WTC11 (cell line): ENCODE measurements at regions of chr22 and their contacts with region 1.

Region 1: DNA sequence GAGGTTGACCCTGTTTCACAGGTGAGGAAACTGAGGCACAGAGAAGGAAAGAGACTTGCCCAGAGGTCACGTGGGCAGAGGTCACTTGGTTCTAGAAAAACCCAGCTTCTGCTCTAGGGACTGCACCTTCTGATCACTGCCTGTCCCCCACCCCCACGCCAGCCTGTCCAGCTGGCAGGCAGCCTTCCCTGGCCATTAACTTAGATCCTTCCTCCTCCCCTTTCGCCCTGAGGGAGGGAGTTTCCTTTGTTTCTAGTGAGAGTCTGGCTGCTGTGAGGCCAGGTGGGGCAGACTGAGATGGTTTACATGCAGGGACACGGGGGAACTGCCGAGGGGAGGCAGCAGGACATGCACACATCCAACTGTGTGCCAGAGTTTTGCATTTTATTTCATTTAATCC is 3.2 kb downstream of the FAM83F start:
- DNase-seq: peak; percentile 62
- ATAC-seq: peak; percentile 31
- H3K4me3 Mint-ChIP-seq: peak overlapping the region; percentile 64
- H3K27ac Mint-ChIP-seq: peak overlapping the region; percentile 100
- H3K4me1 Mint-ChIP-seq: peaks cover 79% of the 10 kb centered on the region
- H3K27me3 Mint-ChIP-seq: peaks cover 8% of the 10 kb centered on the region
- CTCF ChIP-seq: no peak

Region 2: DNA sequence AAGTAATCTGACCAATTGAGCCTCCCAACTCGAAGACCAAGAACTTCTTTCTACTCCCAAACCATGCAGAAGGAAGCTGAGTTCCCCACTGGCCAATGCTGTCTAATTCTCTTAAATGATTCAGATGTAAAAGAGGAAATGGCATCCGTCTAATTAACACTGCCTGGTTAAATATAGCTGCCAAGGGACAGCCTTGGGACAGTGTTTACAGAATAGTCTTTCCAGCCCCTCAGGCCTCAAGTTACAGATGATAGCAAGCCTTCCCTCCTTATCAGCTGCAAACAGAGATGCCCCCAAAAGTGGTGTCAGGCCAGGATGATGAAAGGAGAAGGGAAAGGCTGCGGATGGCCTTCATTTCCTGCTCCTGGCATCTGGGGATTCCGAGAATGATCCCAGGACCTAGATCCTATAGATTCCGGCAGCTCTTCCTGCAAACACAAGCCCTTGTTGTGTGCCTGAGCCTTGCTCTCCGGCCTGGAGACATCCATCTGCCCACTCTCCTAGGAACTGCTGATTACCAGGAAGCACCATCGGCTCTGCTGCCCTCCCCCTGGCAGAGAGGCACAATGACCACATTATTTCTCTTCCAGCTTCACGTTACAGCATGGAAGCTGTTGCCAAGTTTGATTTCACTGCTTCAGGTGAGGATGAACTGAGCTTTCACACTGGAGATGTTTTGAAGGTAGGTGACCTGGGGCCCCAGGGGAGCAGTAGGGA is 51.3 kb before region 1 on chr22:
- CTCF ChIA-PET with region 1: interaction called, 10 read pairs
- POLR2A ChIA-PET with region 1: no interaction called
- DNase-seq: no peak
- ATAC-seq: no peak
- H3K4me3 Mint-ChIP-seq: no peak overlapping the region
- H3K27ac Mint-ChIP-seq: no peak overlapping the region
- H3K4me1 Mint-ChIP-seq: peaks cover 54% of the 10 kb centered on the region
- H3K27me3 Mint-ChIP-seq: peaks cover 6% of the 10 kb centered on the region; the same call in 1 of the 2 replicates
- CTCF ChIP-seq: no peak

Region 3: DNA sequence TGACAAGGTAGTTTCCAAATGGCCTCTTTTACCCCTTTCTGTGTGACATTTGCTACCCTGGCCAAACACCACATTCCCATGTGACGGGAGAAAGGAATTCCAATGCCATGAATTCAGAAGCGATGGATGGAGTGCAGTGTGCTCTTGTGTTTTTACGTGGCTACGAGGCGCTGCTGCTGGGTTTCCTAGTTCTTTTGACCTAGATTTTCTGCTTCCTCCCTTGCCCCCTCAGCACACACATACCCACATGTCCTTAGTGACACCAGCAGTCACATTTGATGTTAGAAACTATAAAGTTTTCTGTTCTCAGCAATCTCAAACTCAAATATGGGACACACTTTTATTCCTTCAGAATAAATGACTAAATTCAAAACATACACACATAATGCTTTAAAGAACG is 45.6 kb before region 1 on chr22:
- CTCF ChIA-PET with region 1: interaction called, 17 read pairs
- POLR2A ChIA-PET with region 1: no interaction called
- DNase-seq: no peak
- ATAC-seq: no peak
- H3K4me3 Mint-ChIP-seq: no peak overlapping the region
- H3K27ac Mint-ChIP-seq: no peak overlapping the region
- H3K4me1 Mint-ChIP-seq: peaks cover 23% of the 10 kb centered on the region
- H3K27me3 Mint-ChIP-seq: peaks cover 6% of the 10 kb centered on the region; the same call in 1 of the 2 replicates
- CTCF ChIP-seq: no peak